AG04449 (cell line): ENCODE measurements at regions of chr3 and their contacts with region 1.

Region 1: GRCh38 chr3:73094951-73095350 is 33.5 kb downstream of the EBLN2 start:
- DNase-seq: no peak
- H3K4me3 ChIP-seq: no peak overlapping the region
- CTCF ChIP-seq: no peak

Region 2: GRCh38 chr3:73070675-73071575 is 24.0 kb before region 1 on chr3:
- CTCF ChIA-PET with region 1: no interaction called
- POLR2A ChIA-PET with region 1: no interaction called
- DNase-seq: peak; percentile 93
- H3K4me3 ChIP-seq: no peak overlapping the region
- CTCF ChIP-seq: no peak

Region 3: DNA sequence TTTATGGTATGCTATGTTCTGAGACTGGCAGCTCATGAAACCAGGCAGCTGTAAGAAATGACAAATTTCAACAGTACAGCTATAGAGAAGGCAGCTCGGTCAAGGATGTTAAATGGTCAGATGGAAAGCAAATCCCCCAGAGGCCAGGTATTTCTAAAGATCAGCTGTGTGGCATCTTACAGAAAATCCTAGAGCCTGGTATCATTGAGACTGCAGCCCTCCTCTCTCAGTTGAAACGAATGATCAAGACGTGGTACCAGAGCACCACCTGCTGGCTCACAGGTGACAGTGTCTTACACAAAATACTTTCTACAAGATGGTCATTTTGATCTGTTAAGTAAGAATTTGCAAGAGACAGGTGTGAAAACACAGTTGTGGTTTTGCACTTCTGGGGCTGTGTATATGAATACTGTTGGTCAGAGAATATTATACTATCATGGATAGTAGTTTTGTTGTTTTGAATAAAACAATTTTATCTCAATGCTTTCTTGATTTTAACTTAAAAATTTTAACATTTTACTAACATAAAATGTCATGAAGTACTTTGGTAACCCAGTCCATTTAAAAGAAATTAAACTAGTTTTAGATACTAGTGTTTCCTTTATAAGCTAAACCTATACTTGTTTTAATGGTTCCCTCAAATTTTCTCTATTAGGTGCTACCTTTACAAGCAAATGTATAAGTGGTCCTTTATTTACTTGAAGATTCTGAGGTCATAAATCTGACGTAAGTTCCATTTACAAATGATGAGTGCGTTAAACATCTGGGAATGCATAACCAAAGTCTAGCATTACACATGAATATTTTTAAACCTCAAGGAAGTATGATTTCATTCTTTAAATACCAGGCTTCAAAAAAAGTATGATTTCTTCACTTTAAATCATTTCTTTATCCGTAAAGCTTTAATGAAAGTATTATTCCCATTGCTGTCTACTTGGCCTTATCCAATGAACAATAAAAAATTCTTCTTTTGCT is 407.9 kb after region 1 on chr3:
- CTCF ChIA-PET with region 1: interaction called, 101 read pairs
- POLR2A ChIA-PET with region 1: no interaction called
- DNase-seq: peak; percentile 77
- H3K4me3 ChIP-seq: no peak overlapping the region; the same call in 1 of the 2 replicates
- CTCF ChIP-seq: peak; percentile 70